ENCODE measurements at regions of chr9 and their contacts with region 1.

Region 1: DNA sequence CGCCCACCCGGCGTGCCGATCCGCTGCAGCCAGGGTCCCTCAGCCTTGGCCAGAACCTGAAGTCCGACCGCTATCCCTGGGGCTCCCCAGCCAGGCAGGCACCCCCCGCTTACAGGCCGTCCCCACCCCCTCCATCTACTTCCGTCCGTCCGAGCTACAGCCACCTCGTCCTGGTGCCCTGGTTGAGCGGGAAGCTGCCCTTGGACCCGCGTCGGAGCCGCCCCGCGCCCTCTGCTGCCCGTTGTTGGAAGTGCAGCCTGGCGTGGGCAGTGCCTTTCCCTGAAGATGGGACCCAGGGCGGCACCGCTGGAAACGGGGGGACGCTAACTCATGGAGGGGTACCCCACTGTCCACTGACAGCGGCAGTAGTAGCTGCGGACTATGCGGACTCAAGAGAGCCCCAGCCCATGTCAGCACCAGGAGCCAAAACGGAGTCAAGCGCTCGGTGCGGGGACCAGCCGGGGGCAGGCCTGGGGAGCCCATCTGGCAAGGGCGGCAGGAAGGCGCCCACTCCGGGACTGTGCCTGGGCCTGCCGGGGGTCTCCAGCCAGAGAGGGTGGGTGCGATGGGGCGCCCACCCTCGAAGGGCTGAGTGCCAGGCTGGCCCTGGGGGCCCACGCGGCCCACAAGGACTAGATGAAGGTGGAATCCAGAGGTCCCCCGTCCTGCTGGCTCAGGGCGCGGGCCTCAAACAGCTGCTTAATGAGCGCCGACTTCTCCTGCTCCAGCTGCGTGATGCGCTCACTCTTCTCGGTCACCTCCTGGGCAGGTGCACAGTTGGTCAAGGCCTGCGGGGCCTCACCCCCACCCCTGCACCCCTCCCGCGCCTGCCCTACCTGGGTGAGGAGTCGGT is 6.1 kb downstream of the SAPCD2 start:
- DNase-seq: peak; percentile 56
- H3K4me3 Mint-ChIP-seq: no peak overlapping the region
- H3K27ac Mint-ChIP-seq: no peak overlapping the region
- H3K4me1 Mint-ChIP-seq: peaks cover 12% of the 10 kb centered on the region
- H3K27me3 Mint-ChIP-seq: no peaks in the 10 kb centered on the region

Region 2: DNA sequence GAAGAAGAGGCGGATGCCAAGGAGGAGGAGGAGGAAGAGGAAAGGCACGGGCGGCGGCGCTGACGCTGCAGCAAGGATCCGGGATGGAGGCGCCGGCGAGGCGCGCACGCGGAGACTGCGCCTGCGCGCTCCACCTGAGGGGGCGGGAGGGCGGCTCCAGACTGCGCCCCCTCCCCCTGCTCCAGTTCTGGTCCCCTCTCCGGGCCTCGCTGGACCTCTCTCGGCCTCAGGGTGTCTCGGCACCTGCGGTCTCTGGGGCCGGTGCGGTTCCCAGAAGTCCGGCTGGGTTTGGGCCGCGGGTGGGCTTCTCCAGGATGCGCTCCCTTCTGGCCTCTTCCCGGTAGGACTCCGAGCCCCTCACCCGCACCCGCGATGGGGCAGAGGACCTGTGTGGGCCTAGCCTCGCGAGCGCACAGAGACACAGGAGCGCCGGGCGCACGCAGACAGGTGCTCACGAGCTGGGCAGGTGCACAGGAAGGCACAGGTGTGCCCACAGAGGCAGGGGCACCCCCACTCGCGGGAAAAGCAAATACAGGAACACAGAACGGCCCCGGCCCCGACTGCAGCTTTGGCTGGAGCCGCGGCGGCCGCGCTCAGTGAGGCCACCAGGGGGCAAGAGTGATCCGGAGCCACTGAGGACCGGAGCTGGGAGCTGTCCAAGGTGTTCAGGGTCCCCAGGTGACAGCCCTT is 18.0 kb before region 1 on chr9 and contains the start of gene NPDC1:
- CTCF ChIA-PET with region 1: interaction called, 157 read pairs
- POLR2A ChIA-PET with region 1: no interaction called
- DNase-seq: peak; percentile 86
- H3K4me3 Mint-ChIP-seq: peak within 1 kb of the TSS; percentile 70
- H3K27ac Mint-ChIP-seq: peak within 1 kb of the TSS; percentile 54
- H3K4me1 Mint-ChIP-seq: peaks cover 19% of the 10 kb centered on the region
- H3K27me3 Mint-ChIP-seq: peaks cover 32% of the 10 kb centered on the region
- total RNA-seq, gene NPDC1: 35.5 to 41.4 TPM

Measured in activated CD4-positive, alpha-beta T cell treated with anti-CD3 and anti-CD28 coated beads, Interleukin-2, amount 10 ng/mL, durations not matched to agents 7 days and 5 days (primary cell).